A673 (cell line): ENCODE measurements at regions of chr9 and their contacts with region 1.

Region 1: DNA sequence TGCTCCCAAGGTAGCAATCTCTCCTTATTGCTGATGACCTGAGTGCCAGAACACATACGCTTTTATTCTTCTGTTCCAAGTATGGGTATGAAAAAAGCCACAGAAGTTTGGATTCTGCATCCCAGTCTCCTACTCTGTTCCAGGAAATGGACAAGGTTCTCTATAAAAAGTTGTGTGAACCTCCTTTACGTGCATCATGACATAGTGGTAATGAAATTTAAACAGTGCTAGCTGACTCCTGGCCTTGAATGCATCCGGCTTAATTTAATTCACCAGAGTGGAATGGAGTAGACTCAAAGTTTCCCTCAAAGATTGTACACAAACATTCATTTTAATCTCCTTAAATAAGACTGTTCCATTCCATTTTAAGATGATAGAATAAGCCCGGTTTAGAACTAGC is 68.9 kb downstream of the LURAP1L start:
- DNase-seq: no peak
- H3K4me3 ChIP-seq: no peak overlapping the region
- H3K27ac ChIP-seq: no peak overlapping the region
- H3K4me1 ChIP-seq: no peaks in the 10 kb centered on the region
- H3K27me3 ChIP-seq: no peaks in the 10 kb centered on the region
- CTCF ChIP-seq: no peak

Region 2: DNA sequence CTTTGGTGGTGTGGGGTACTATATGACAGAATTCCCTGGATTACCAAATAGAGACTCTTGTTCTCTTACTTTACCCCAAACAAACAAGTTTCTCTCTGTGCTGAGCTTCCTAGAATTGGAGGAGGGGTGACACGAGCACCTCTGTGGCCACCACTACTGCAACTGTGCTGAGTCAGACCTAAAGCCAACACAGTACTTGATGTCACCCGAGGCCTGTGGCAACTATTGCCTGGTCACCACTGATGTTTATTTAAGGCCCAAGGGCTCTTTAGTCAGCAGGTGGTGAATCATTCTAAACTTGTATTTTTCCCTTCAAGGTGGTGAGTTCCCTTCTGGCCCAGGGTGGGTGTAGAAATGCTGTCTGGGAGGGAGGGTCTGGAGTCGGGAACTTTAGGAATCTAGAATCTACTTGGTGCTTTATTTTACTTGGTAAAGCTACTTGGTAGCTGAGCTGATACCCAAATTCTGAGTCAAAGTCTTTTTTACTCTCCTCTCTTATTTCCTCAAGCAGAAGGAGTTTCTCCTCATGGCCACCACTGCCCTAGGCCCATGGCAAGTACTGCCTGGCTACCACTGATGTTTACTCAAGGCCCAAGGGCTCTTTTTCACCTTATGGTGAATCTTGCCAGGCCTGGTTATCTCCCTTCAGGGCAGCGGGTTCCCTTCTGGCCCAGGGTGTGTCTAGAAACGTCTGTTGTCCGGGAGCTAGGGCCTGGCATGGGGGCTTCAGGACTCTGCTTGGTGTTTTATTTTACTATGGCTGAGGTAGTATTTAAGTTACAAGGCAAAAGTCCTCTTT is 59.1 kb before region 1 on chr9:
- CTCF ChIA-PET with region 1: no interaction called
- POLR2A ChIA-PET with region 1: no interaction called
- intact Hi-C with region 1: loop called (anchors 2 kb)
- DNase-seq: no peak
- H3K4me3 ChIP-seq: no peak overlapping the region
- H3K27ac ChIP-seq: no peak overlapping the region
- H3K4me1 ChIP-seq: no peaks in the 10 kb centered on the region
- H3K27me3 ChIP-seq: no peaks in the 10 kb centered on the region
- CTCF ChIP-seq: no peak

Region 3: DNA sequence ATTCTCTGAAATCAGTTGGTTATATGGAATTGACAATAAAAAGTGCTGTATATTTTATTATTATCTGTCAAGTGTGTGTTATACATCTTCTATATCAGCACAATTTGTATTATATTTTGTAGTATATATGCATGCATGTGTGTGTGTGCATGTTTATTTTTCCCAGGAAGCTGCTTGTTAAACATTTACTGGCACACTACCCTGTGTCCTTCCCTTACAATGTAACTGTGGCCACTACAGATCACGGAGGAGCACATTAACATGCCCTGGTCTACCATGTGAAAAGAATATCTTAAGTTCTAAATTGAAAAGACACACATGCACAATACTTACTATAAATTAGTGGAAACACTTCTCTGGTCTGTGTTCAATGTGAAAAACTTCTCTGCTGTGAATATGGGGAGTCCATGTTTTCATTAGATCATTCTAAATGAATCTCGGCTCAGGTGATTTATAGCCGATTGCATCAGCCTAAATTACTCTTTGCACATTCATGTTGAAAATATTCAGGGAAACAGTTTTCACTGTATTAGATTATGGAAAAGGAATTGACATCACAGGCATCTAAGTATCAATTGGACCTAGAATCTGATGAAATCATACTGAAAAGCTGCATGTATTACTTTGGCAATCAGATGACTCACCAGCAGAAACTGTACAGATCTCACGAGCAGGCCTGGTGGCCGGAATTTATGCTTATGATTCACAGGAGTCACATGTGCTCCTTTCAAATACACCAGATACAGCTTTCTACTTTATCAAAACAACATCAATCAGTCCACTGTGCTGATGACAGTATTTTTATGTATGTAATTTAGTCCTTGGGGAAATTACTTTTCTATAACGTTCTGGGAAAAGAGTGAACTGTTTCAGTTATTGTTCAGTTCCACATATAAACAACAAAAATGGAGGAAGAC is 29.5 kb before region 1 on chr9:
- CTCF ChIA-PET with region 1: no interaction called
- POLR2A ChIA-PET with region 1: no interaction called
- intact Hi-C with region 1: no loop called
- DNase-seq: peak; percentile 89
- H3K4me3 ChIP-seq: peak overlapping the region; percentile 18
- H3K27ac ChIP-seq: peak overlapping the region; percentile 89
- H3K4me1 ChIP-seq: peaks cover 34% of the 10 kb centered on the region
- H3K27me3 ChIP-seq: no peaks in the 10 kb centered on the region
- CTCF ChIP-seq: 0 out of 2 replicates have a peak, but pooled peaks have one; percentile 27